ENCODE measurements at regions of chr17 and their contacts with region 1.

Region 1: DNA sequence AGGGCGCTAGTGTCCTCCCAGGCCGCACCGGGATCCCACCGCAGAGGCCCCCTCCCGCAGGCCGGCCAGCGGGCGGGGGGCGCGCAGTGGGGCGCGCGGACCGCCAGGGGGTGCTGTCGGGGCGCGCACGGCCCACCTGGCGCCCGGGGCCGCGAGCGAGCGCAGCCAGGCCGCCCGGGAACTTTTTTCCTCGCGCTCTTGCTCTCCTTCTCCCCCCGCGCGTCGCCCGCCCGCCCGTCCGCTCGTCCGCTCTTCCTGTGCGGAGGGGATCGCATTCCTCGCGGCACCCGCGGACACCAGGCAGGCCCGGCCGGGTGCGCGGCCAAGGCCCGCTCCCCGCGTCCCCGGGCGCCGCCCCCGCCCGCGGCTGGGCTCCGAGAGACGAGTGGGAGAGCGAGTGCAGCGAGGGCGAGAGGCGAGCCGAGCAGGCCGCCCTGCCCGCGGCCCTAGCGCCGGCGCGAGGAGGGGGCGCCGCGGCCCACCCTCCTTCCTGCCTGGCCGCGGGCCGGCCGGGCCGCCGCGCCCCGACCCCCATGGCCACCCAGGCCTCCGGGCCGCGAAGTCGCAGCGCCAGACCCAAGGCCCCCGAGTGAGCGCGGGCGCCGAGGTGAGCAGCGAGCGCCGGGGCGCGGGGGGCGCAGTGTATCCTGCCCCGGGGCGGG is at the start of gene RAI1:
- DNase-seq: peak; percentile 65 to 85
- H3K4me3 ChIP-seq: peak within 1 kb of the TSS; percentile 73
- H3K27ac ChIP-seq: peak within 1 kb of the TSS; percentile 64
- H3K4me1 ChIP-seq: peaks cover 48% of the 10 kb centered on the region
- H3K27me3 ChIP-seq: no peaks in the 10 kb centered on the region
- CTCF ChIP-seq: no peak; the same call in 1 of the 2 replicates
- total RNA-seq, gene RAI1: 86.3 and 92.9 TPM in 2 replicates

Region 2: DNA sequence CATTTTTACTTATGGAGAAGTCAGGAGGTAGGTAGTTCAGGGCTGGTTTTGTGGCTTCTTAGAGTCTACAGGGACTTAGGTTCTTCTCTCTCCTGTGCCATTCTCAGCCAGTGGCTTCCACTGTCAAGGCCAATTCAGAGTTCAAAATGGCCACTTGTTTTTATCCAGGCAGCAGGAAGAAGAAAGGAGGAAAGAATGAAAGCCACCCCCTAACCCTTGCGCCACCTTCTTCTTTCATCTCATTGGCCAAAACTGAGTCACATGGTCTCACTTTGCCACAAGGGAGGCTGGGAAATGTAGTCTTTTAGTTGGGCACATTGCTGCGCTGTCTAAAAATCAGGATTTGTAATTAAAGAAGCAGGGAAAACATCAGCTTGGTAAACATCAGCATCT is 265.3 kb before region 1 on chr17:
- CTCF ChIA-PET with region 1: no interaction called
- POLR2A ChIA-PET with region 1: no interaction called
- intact Hi-C with region 1: no loop called
- DNase-seq: peak; percentile 33 to 66
- H3K4me3 ChIP-seq: no peak overlapping the region
- H3K27ac ChIP-seq: peak overlapping the region; percentile 39
- H3K4me1 ChIP-seq: peaks cover 18% of the 10 kb centered on the region
- H3K27me3 ChIP-seq: peaks cover 2% of the 10 kb centered on the region; the same call in 1 of the 2 replicates
- CTCF ChIP-seq: no peak

Region 3: GRCh38 chr17:17694169-17695081 is 13.1 kb after region 1 on chr17:
- CTCF ChIA-PET with region 1: interaction called, 4 read pairs
- POLR2A ChIA-PET with region 1: interaction called, 6 read pairs
- intact Hi-C with region 1: loop called (anchors 1 kb)
- DNase-seq: peak; percentile 72 to 76
- H3K4me3 ChIP-seq: peak overlapping the region; percentile 96
- H3K27ac ChIP-seq: peak overlapping the region; percentile 94
- H3K4me1 ChIP-seq: peaks cover 88% of the 10 kb centered on the region
- H3K27me3 ChIP-seq: no peaks in the 10 kb centered on the region
- CTCF ChIP-seq: no peak

Region 4: GRCh38 chr17:17729620-17730249 is 48.4 kb after region 1 on chr17:
- CTCF ChIA-PET with region 1: interaction called, 7 read pairs
- POLR2A ChIA-PET with region 1: interaction called, 5 read pairs
- intact Hi-C with region 1: loop called (anchors 1 kb)
- DNase-seq: peak; percentile 66 to 72
- H3K4me3 ChIP-seq: peak overlapping the region; percentile 13; the same call in 1 of the 2 replicates
- H3K27ac ChIP-seq: peak overlapping the region; percentile 40; the same call in 1 of the 2 replicates
- H3K4me1 ChIP-seq: peaks cover 74% of the 10 kb centered on the region
- H3K27me3 ChIP-seq: no peaks in the 10 kb centered on the region
- CTCF ChIP-seq: peak; percentile 86

Region 5: DNA sequence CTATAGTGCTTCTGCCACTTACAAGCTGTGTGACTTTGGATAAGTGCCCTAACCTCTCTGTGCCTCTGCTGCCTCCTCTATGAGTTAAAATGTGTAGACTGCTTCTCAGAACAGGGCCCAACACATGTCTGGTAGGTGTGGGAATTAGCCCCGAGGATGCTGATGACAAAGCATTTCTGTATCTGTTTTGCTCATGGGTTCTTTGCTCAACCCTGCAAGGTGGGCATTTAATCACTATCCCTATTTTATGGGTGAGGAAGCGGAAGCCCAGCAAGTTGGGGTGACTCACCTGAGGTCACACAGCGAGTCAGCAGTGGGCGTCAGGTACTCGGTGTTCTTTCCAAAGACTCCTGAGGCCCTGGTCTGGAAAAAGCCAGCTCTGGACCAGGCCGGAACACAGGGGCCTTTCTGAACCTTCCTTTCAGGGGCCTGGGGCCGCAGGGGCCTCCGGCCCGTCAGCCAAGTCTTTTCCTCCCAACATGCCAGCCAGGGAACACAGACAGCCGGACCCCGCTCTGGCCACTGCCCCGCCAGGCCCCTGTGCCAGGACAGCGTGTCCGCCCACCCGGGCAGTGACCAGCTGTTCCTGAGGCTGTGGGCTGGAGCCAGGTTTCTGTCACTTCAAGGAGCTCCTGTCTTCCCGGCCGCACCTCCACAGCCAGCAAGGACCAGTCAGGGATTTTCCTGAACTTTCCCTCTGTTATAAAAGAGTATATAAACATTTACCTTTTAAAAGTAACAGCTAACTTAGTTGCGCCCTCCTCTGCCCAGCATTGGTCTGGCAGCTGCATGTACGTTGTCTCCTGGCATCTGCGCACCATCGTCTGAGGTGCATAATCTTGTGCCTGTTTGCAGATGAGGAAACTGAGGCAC is 92.9 kb after region 1 on chr17:
- CTCF ChIA-PET with region 1: interaction called, 3 read pairs
- POLR2A ChIA-PET with region 1: no interaction called
- intact Hi-C with region 1: loop called (anchors 1 kb)
- DNase-seq: peak in 1 of 2 experiments; percentile 68
- H3K4me3 ChIP-seq: no peak overlapping the region
- H3K27ac ChIP-seq: peak overlapping the region; percentile 51
- H3K4me1 ChIP-seq: peaks cover 16% of the 10 kb centered on the region; the same call in 1 of the 2 replicates
- H3K27me3 ChIP-seq: no peaks in the 10 kb centered on the region
- CTCF ChIP-seq: peak; percentile 61

Region 6: GRCh38 chr17:17812211-17813057 is 131.1 kb after region 1 on chr17:
- CTCF ChIA-PET with region 1: interaction called, 7 read pairs
- POLR2A ChIA-PET with region 1: no interaction called
- intact Hi-C with region 1: loop called (anchors 2 kb)
- DNase-seq: peak; percentile 49 to 76
- H3K4me3 ChIP-seq: no peak overlapping the region
- H3K27ac ChIP-seq: 0 out of 2 replicates have a peak overlapping the region, but pooled peaks have one; percentile 8
- H3K4me1 ChIP-seq: peaks cover 16% of the 10 kb centered on the region; the same call in 1 of the 2 replicates
- H3K27me3 ChIP-seq: no peaks in the 10 kb centered on the region
- CTCF ChIP-seq: peak; percentile 100

Region 7: GRCh38 chr17:17972126-17972951 is 291.0 kb after region 1 on chr17 and contains the starts of genes DRC3 and TOM1L2:
- CTCF ChIA-PET with region 1: no interaction called
- POLR2A ChIA-PET with region 1: interaction called, 3 read pairs
- intact Hi-C with region 1: loop called (anchors 5 kb)
- DNase-seq: peak; percentile 100
- H3K4me3 ChIP-seq: peak within 1 kb of the TSS; percentile 82
- H3K27ac ChIP-seq: peak within 1 kb of the TSS; percentile 40
- H3K4me1 ChIP-seq: peaks cover 28% of the 10 kb centered on the region
- H3K27me3 ChIP-seq: no peaks in the 10 kb centered on the region
- CTCF ChIP-seq: no peak
- total RNA-seq, gene DRC3: 7.2 and 15.2 TPM in 2 replicates
- total RNA-seq, gene TOM1L2: 68.5 and 71.8 TPM in 2 replicates

Measured in PC-9 (cell line).